ENCODE measurements at regions of chr20 and their contacts with region 1.

Region 1: GRCh38 chr20:57498425-57499400 is 26.2 kb downstream of the CTCFL start:
- DNase-seq: no peak
- H3K4me3 Mint-ChIP-seq: no peak overlapping the region
- H3K27ac Mint-ChIP-seq: no peak overlapping the region
- H3K4me1 Mint-ChIP-seq: peaks cover 13% of the 10 kb centered on the region
- H3K27me3 Mint-ChIP-seq: peaks cover 39% of the 10 kb centered on the region

Region 2: GRCh38 chr20:57089691-57090150 is 409.0 kb before region 1 on chr20:
- intact Hi-C with region 1: loop called (anchors 1 kb)
- DNase-seq: peak; percentile 38
- H3K4me3 Mint-ChIP-seq: no peak overlapping the region
- H3K27ac Mint-ChIP-seq: peak overlapping the region; percentile 76
- H3K4me1 Mint-ChIP-seq: peaks cover 20% of the 10 kb centered on the region
- H3K27me3 Mint-ChIP-seq: peaks cover 11% of the 10 kb centered on the region

Region 3: GRCh38 chr20:57383447-57384347 is 115.0 kb before region 1 on chr20:
- intact Hi-C with region 1: loop called (anchors 1 kb)
- DNase-seq: no peak
- H3K4me3 Mint-ChIP-seq: no peak overlapping the region
- H3K27ac Mint-ChIP-seq: no peak overlapping the region
- H3K4me1 Mint-ChIP-seq: peaks cover 14% of the 10 kb centered on the region
- H3K27me3 Mint-ChIP-seq: no peaks in the 10 kb centered on the region

Region 4: GRCh38 chr20:57432874-57433491 is 65.7 kb before region 1 on chr20:
- intact Hi-C with region 1: loop called (anchors 2 kb)
- DNase-seq: peak; percentile 72
- H3K4me3 Mint-ChIP-seq: peak overlapping the region; percentile 37
- H3K27ac Mint-ChIP-seq: peak overlapping the region; percentile 79
- H3K4me1 Mint-ChIP-seq: peaks cover 49% of the 10 kb centered on the region
- H3K27me3 Mint-ChIP-seq: peaks cover 3% of the 10 kb centered on the region